RWPE1 (cell line): ENCODE measurements at regions of chr5 and their contacts with region 1.

Region 1: GRCh38 chr5:142356716-142357473 is 32.1 kb upstream of the SPRY4 start:
- DNase-seq: peak; percentile 94
- H3K27ac ChIP-seq: peak overlapping the region; percentile 87
- CTCF ChIP-seq: no peak

Region 2: DNA sequence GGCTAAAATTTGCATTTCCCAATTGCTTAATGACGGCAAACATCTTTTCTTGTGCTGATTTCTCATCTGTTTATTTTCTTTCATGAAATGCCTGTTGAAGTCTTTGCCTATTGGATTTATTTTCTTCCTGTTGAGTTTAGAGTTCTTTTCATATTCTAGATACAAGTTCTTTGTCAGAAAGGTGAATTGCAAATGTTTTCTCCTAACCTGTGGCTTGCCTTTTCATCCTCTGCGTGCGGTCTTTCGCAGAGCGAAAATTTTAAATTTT is 147.9 kb before region 1 on chr5:
- CTCF ChIA-PET with region 1: no interaction called
- POLR2A ChIA-PET with region 1: interaction called, 11 read pairs
- DNase-seq: no peak
- H3K27ac ChIP-seq: no peak overlapping the region
- CTCF ChIP-seq: no peak

Region 3: GRCh38 chr5:142324871-142325724 is 31.8 kb before region 1 on chr5 and contains the start of gene SPRY4:
- CTCF ChIA-PET with region 1: interaction called, 5 read pairs
- POLR2A ChIA-PET with region 1: interaction called, 16 read pairs
- DNase-seq: peak; percentile 99
- H3K27ac ChIP-seq: peak within 1 kb of the TSS; percentile 91
- CTCF ChIP-seq: no peak